Ovary (tissue), 10 donors: ENCODE measurements at regions of chr18 and their contacts with region 1.

Region 1: DNA sequence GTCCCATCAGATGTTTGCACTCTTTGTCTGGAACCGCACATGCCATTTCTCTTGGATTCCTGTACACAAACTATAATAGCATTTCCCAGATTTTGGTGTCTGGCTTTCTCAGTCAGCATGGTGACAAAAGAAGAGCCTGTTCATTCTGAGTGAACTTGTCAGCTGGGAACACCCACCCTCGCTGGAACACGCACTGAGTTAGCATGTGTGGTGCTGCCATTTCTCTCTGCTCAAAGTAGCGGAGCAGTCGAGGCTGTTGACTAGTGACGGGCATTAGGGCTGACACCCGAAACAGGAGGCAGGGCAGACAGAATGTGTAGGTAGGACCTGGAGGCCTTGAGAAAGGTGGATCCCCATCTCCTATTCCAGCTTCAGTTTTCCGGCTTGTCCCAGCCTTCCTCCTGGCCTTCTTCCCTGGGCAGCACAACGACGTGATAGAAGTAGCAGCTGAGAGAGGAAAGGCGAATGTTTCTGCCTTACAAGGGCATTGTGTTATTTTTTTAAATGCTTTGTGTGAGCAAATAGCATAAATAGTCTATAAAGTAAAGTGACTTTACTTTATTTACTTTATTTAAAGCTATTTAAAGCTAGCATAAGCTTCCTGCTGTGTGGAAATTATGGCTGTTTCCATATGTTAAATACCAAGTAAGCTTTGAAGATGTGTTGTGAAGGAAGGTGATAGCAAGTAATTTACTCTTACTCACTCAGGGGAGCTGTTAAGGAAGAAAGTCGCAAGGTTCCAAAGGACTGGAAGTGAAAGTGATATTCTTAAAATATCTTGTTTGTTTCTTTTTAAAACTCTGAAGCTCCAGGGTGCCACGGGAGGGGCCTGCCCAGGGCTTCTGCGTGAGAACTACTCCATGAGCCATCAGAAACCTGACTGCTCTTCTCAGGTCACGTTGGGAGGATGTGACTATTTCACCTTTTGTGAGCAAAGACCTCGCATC is 272.6 kb downstream of the NEDD4L start:
- DNase-seq: no peak
- H3K4me3 ChIP-seq: no peak overlapping the region
- H3K27ac ChIP-seq: peak overlapping the region in 1 of 2 donors; percentile 42
- H3K4me1 ChIP-seq: peaks cover 4% of the 10 kb centered on the region
- H3K27me3 ChIP-seq: no peaks in the 10 kb centered on the region
- CTCF ChIP-seq: no peak
- EP300 ChIP-seq: no peak
- POLR2A ChIP-seq: no peak

Region 2: GRCh38 chr18:58117786-58118403 is 198.8 kb before region 1 on chr18:
- intact Hi-C with region 1: no loop called
- DNase-seq: peak; percentile 42 to 63 (median 50)
- H3K4me3 ChIP-seq: no peak overlapping the region
- H3K27ac ChIP-seq: no peak overlapping the region
- H3K4me1 ChIP-seq: peaks cover 1% of the 10 kb centered on the region
- H3K27me3 ChIP-seq: no peaks in the 10 kb centered on the region
- CTCF ChIP-seq: no peak
- EP300 ChIP-seq: no peak
- POLR2A ChIP-seq: no peak

Region 3: DNA sequence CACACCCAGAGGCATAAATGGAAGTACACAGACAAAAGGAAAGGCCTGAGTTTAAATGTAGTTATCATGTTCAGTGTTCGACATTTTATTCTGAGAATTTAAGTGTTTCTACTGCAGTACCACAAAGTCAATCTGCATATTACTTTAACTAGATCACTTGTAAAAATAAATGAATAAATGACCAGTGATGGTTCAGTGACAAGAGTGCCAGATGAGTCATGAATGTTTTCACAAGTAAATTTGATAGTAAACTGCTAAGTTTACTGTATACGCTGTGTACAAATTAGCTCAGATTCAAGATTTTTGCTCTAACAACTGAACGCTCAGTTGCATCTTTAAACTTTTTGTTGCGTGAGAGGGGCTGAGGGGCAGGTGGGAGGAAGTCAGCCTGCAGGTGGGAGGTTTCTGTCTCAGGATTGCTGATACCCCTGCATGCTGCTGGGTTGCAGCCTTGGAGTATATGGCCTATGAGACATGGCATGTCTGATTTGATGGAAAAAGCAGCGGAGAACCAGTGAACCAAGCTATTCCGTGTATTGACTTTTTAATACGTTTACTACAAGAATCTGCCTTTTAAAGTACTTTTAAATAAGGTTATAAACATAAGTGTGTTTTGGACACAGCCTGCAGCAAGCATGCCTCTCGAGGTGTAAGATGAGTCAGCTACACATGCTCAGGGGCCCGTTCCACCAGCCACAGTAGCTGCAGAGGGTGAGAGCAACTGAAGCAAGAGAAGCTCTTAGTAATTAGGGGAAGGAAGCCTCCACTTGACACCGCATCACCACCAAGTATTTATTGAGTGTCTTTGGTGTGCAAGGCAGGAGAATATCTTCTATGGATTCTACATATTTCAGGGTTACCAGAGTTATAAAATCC is 27.5 kb before region 1 on chr18:
- intact Hi-C with region 1: no loop called
- DNase-seq: no peak
- H3K4me3 ChIP-seq: no peak overlapping the region
- H3K27ac ChIP-seq: no peak overlapping the region
- H3K4me1 ChIP-seq: no peaks in the 10 kb centered on the region
- H3K27me3 ChIP-seq: no peaks in the 10 kb centered on the region
- CTCF ChIP-seq: no peak
- EP300 ChIP-seq: no peak
- POLR2A ChIP-seq: no peak

Region 4: GRCh38 chr18:58359218-58359617 is 42.5 kb after region 1 on chr18:
- intact Hi-C with region 1: loop called in 2 of 4 experiments (anchors 1 to 5 kb)
- DNase-seq: no peak
- H3K4me3 ChIP-seq: no peak overlapping the region
- H3K27ac ChIP-seq: no peak overlapping the region
- H3K4me1 ChIP-seq: peaks cover 3% of the 10 kb centered on the region
- H3K27me3 ChIP-seq: no peaks in the 10 kb centered on the region
- CTCF ChIP-seq: no peak
- EP300 ChIP-seq: no peak
- POLR2A ChIP-seq: no peak